OCI-LY7 (cell line): ENCODE measurements at regions of chr11 and their contacts with region 1.

Region 1: GRCh38 chr11:35106595-35106994 is 32.4 kb upstream of the CD44 start:
- DNase-seq: peak; percentile 84
- H3K4me3 ChIP-seq: peak overlapping the region; percentile 35
- H3K27ac ChIP-seq: peak overlapping the region; percentile 84
- H3K4me1 ChIP-seq: peaks cover 55% of the 10 kb centered on the region
- CTCF ChIP-seq: no peak

Region 2: GRCh38 chr11:35077709-35078469 is 28.7 kb before region 1 on chr11:
- CTCF ChIA-PET with region 1: no interaction called
- POLR2A ChIA-PET with region 1: no interaction called
- intact Hi-C with region 1: loop called (anchors 1 kb)
- DNase-seq: peak; percentile 85
- H3K4me3 ChIP-seq: peak overlapping the region; percentile 35
- H3K27ac ChIP-seq: peak overlapping the region; percentile 89
- H3K4me1 ChIP-seq: peaks cover 50% of the 10 kb centered on the region
- CTCF ChIP-seq: no peak

Region 3: DNA sequence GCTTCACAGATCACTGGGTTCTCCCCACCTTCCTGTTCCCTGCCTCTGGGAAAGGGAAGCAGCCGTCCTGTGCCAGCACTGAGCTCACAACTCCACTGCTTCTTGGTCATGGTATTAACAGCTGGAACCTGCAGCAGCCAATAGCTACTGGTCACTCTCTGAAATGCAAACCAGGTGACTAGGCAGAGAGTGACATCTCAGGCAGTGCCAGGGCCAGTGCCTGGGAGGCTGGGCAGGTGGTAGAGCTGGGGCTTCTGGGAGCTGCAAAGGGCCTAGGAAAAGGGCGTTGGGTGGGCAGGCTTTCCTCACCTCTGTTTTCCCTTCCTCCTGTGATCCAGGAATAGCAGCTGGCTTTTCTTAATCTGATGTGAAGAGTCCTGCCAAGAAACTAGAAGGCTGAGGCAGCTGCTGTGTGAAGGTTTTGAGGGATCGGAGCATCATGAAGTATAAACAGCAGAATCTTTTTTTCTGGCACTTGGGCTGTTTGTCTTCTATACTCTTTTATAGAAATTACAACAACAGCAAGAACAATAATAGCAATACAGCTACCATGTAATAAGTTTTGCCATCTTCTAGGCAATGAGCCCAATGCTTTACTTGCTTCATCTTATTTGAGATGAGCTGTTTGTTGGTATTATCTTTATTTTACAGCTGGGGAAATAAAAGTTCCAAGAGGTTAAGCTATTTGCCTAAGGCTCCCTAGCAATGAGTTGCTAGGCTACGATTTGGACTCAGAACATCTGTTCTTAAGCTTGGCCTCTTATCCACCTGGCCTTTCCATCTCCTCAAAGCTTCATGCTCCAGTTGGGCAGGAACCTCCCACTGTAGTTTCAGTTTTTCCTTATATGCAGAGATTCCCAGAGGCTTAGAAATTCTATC is 10.4 kb after region 1 on chr11:
- CTCF ChIA-PET with region 1: no interaction called
- POLR2A ChIA-PET with region 1: interaction called, 23 read pairs
- intact Hi-C with region 1: no loop called
- DNase-seq: no peak
- H3K4me3 ChIP-seq: no peak overlapping the region
- H3K27ac ChIP-seq: no peak overlapping the region
- H3K4me1 ChIP-seq: peaks cover 84% of the 10 kb centered on the region
- CTCF ChIP-seq: no peak